Activated CD4-positive, alpha-beta memory T cell treated with anti-CD3 and anti-CD28 coated beads for 36 hours (primary cell): ENCODE measurements at regions of chr18 and their contacts with region 1.

Region 1: DNA sequence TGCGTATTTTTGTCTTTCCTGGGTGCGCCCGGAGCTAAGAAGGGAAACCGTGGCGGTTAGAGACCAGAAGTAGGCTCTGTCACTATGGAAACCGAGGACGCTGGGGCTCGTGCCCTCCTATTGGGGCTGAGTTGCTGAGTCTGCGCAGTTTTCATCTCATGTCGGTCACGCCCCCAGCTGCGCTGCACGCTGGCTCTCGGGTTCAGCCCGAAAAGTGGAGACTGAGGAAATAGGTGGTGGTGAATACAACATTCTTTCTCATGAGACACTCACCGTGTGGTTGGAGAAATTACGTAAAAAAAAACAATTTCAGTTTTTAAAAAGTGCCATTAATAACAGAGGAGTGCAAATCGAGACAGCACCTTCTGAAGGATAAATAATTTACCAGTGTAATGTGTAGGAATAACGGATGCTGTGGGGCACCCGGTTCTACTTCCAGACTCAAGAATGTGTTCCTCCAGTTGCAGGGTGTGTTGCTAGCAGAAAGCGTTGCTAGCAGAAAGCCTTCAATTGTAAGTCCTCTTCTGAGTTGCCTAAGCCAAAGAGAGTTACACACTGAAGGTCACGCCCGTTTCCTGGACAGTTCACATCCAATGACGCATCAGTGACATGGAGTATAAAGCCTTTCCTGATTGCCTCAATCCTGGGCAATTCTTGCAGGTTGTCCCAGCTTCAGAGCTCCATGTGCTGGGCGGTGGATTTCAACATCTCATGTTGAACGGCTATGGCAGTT is 20.4 kb upstream of the CXXC1 start:
- DNase-seq: peak; percentile 93
- H3K4me3 Mint-ChIP-seq: peak overlapping the region; percentile 83
- H3K27ac Mint-ChIP-seq: no peak overlapping the region
- H3K4me1 Mint-ChIP-seq: peaks cover 4% of the 10 kb centered on the region
- H3K27me3 Mint-ChIP-seq: peaks cover 7% of the 10 kb centered on the region

Region 2: GRCh38 chr18:50297621-50298442 is 10.1 kb before region 1 on chr18:
- CTCF ChIA-PET with region 1: interaction called, 3 read pairs
- POLR2A ChIA-PET with region 1: no interaction called
- intact Hi-C with region 1: loop called (anchors 1 kb)
- DNase-seq: peak; percentile 88
- H3K4me3 Mint-ChIP-seq: peak overlapping the region; percentile 72
- H3K27ac Mint-ChIP-seq: no peak overlapping the region
- H3K4me1 Mint-ChIP-seq: peaks cover 10% of the 10 kb centered on the region
- H3K27me3 Mint-ChIP-seq: peaks cover 19% of the 10 kb centered on the region

Region 3: GRCh38 chr18:50734342-50734741 is 426.4 kb after region 1 on chr18:
- CTCF ChIA-PET with region 1: no interaction called
- POLR2A ChIA-PET with region 1: no interaction called
- intact Hi-C with region 1: no loop called
- DNase-seq: no peak
- H3K4me3 Mint-ChIP-seq: no peak overlapping the region
- H3K27ac Mint-ChIP-seq: no peak overlapping the region
- H3K4me1 Mint-ChIP-seq: no peaks in the 10 kb centered on the region
- H3K27me3 Mint-ChIP-seq: no peaks in the 10 kb centered on the region